Ovary (tissue), 10 donors: ENCODE measurements at regions of chr11 and their contacts with region 1.

Region 1: GRCh38 chr11:117226388-117227385 is 5.2 kb downstream of the PCSK7 start:
- DNase-seq: peak in 2 of 5 donors; percentile 51 to 53
- H3K4me3 ChIP-seq: no peak overlapping the region
- H3K27ac ChIP-seq: no peak overlapping the region
- H3K4me1 ChIP-seq: peaks cover 4% of the 10 kb centered on the region
- H3K27me3 ChIP-seq: no peaks in the 10 kb centered on the region
- CTCF ChIP-seq: peak; percentile 54 to 84 (median 80)
- EP300 ChIP-seq: no peak
- POLR2A ChIP-seq: no peak

Region 2: DNA sequence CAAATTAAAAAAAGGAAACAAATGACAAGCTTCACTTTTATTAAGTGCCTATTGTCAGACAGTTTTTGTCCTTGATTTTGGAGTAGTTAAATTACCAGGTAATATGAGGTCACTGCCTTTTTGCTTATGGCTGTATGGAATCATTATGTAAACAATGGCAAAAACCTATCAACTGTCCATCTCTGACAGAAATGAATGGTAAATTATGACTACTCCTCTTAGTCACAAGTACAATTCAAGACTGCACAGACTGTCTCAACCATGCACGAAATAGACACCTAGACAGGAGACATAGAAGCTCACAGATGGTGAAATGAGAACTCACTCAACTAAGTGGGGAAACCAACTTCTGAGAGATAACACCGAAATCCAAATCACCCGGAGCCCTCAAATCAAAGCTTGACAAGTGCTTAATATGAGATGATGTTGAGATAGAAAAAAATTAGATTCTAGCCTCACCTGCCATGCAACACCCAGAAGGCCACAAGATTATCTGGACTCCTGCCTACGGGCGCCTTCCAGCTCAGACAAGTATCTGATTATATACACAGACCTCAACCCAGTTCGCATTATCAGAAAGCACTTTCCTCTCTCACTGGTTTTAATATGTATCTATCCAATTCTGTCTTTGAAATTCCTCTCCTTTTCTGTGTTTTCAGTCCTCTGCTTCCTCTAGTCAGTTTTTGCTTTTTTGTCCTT is 1921.8 kb before region 1 on chr11:
- intact Hi-C with region 1: no loop called
- DNase-seq: no peak
- H3K4me3 ChIP-seq: no peak overlapping the region
- H3K27ac ChIP-seq: no peak overlapping the region
- H3K4me1 ChIP-seq: no peaks in the 10 kb centered on the region
- H3K27me3 ChIP-seq: no peaks in the 10 kb centered on the region
- CTCF ChIP-seq: no peak
- EP300 ChIP-seq: no peak
- POLR2A ChIP-seq: no peak

Region 3: DNA sequence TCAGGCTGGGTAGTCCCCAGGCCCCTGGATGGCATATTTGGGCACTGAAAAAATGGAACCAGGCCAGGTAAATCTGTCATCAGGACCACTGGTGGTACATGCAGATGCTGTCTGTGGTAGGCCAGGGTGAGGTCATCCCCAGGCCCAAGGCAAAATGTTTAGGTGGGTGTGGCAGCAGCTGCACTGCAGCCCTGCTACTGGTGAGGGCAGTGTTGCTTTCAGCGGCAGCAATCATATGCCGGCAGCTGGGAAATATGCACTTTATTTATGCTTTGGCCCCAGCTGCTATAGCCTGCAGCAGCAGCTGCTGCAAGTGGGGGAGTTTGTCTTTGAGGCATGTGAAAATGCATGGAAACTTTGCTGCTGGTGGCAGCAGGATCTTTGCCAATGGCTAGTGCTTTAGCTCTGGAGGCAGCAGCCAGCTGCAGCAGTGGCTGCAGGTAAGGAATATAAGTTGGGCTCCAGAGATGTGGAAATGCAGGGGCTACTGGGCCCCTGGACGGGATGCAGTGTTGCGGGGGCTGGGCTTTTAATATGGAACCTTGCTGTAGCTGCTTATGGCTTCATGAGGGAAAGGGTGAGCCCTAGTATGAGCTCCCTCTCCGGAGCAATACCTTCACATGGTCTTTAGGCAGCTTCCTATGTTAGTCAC is 1356.8 kb before region 1 on chr11:
- intact Hi-C with region 1: no loop called
- DNase-seq: no peak
- H3K4me3 ChIP-seq: no peak overlapping the region
- H3K27ac ChIP-seq: no peak overlapping the region
- H3K4me1 ChIP-seq: no peaks in the 10 kb centered on the region
- H3K27me3 ChIP-seq: no peaks in the 10 kb centered on the region
- CTCF ChIP-seq: no peak
- EP300 ChIP-seq: no peak
- POLR2A ChIP-seq: no peak

Region 4: DNA sequence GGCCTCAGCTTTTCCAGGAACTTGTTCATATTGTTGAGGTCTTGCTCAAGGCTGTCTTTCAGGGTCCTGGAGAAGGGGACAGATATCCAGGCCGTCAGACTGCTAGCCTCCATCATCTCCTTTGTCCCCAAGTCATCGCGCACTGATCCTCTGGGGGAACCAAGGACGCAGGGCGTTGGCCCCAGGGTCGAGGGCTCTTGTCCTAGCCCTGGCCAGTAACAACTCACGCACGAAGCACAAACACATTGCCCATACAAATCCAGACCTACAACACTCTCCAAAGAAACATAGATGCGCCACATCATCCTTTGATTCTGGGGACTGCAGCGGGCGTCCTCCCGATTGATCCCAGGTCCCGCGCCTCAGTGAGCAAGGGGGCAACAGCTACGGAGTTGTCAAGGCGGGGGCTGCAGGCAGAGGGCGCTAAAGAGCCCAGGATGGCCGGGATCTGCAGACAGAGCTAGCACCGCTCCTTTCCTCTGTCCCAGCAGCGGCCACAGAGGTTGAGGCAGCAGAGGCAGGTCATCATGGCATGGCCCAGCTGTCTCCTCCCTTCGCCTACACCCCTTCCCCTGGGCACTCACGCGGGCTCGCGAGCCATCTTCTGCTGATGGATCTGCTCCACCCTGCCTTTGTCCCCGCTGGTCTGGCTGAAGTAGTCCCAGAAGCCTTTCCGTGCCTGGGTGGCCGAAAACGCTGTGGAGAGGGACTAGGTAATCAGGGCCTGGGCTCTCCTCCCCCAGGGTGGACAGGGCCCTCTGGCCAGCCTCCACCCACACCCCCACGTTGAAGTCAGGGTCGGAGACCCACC is 435.5 kb before region 1 on chr11:
- intact Hi-C with region 1: loop called in 2 of 4 experiments (anchors 5 to 10 kb)
- DNase-seq: peak; percentile 68 to 88 (median 85)
- H3K4me3 ChIP-seq: no peak overlapping the region
- H3K27ac ChIP-seq: no peak overlapping the region
- H3K4me1 ChIP-seq: peaks cover 9% of the 10 kb centered on the region
- H3K27me3 ChIP-seq: no peaks in the 10 kb centered on the region
- CTCF ChIP-seq: peak; percentile 68 to 85 (median 82)
- EP300 ChIP-seq: no peak
- POLR2A ChIP-seq: no peak

Region 5: DNA sequence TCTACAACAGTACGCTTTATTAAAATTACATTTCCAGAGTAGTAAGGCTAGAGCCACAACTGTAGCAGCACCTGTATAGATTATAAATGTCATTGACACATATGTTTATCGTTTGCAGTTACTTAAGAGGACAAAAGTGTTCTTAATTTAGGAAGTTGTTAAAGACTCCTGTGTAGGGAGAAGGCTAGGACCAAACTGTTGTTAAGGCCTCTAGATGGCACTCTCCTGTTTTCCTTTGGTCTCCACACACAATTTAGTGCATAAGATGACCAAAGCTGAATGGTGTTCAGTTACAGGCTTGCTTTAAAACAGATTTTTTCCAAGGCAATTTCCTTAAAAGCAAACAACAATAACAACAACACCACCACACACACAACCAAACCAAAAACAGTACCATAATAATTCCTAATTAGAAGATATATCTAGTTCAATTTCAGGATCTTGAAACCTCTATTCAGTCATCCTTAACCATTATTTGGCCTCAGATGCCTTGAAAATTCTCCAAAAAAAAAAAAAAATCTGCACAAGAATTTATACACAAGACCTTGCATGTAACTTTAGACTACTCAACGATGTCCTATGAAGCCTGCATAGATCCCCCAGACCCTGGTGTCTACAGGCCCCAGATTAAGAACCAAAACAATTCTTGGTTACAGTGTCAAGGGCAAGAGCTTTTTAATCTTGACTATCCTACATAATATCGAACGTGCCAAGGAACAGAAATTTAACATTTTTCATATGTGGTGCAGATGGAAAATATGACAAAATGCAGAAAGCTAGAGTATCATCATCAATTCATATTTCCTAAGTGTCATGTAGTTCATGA is 346.7 kb before region 1 on chr11:
- intact Hi-C with region 1: loop called in 2 of 4 experiments (anchors 5 to 10 kb)
- DNase-seq: no peak
- H3K4me3 ChIP-seq: no peak overlapping the region
- H3K27ac ChIP-seq: no peak overlapping the region
- H3K4me1 ChIP-seq: no peaks in the 10 kb centered on the region
- H3K27me3 ChIP-seq: no peaks in the 10 kb centered on the region
- CTCF ChIP-seq: peak in 2 of 3 donors; percentile 55 to 76
- EP300 ChIP-seq: no peak
- POLR2A ChIP-seq: no peak

Region 6: GRCh38 chr11:117107701-117108590 is 118.7 kb before region 1 on chr11:
- intact Hi-C with region 1: loop called in 2 of 4 experiments (anchors 10 kb)
- DNase-seq: no peak
- H3K4me3 ChIP-seq: no peak overlapping the region
- H3K27ac ChIP-seq: no peak overlapping the region
- H3K4me1 ChIP-seq: no peaks in the 10 kb centered on the region
- H3K27me3 ChIP-seq: no peaks in the 10 kb centered on the region
- CTCF ChIP-seq: no peak
- EP300 ChIP-seq: no peak
- POLR2A ChIP-seq: no peak

Region 7: DNA sequence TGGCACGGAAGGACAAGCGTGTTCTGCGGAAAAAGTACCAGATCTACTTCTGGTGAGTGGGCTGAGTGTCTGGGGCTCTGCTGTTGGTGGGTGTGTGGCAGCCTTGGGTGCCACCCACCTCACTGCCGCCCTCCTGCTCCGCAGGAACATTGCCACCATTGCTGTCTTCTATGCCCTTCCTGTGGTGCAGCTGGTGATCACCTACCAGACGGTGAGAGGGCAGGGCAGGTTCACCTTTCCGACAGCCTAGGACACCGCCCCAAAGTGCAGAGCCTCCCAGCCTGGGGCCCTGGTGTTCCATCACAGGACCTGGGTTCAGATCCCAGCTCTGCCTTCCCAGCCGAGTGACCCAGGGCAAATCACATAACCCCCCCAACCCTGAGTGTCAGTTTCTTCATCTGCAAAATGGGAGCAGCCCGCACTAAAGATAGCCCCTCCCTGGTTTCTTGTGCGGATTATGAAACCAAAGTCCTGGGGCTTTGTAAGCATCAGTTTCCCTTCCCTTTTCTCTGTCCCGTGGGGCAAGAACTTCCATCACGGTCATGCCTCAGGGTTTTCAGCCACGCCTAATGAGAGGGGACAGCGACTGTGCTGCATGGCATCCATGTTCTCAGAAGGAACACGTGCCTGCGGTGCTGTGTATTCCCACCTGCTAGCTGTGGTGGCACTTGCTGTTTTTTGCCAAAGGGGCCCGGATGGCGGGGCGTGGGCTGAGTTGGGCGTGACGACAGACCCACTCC is 37.3 kb before region 1 on chr11:
- intact Hi-C with region 1: loop called in 2 of 4 experiments (anchors 5 kb)
- DNase-seq: peak in 3 of 5 donors; percentile 14 to 31 (median 22)
- H3K4me3 ChIP-seq: no peak overlapping the region
- H3K27ac ChIP-seq: no peak overlapping the region
- H3K4me1 ChIP-seq: peaks cover 19% of the 10 kb centered on the region
- H3K27me3 ChIP-seq: no peaks in the 10 kb centered on the region
- CTCF ChIP-seq: no peak
- EP300 ChIP-seq: no peak
- POLR2A ChIP-seq: no peak

Region 8: GRCh38 chr11:117300283-117300663 is 73.6 kb after region 1 on chr11:
- intact Hi-C with region 1: no loop called
- DNase-seq: peak; percentile 81 to 86 (median 85)
- H3K4me3 ChIP-seq: peak overlapping the region; percentile 20
- H3K27ac ChIP-seq: peak overlapping the region in 1 of 2 donors; percentile 70
- H3K4me1 ChIP-seq: peaks cover 18% of the 10 kb centered on the region
- H3K27me3 ChIP-seq: no peaks in the 10 kb centered on the region
- CTCF ChIP-seq: no peak
- EP300 ChIP-seq: no peak
- POLR2A ChIP-seq: no peak

Region 9: DNA sequence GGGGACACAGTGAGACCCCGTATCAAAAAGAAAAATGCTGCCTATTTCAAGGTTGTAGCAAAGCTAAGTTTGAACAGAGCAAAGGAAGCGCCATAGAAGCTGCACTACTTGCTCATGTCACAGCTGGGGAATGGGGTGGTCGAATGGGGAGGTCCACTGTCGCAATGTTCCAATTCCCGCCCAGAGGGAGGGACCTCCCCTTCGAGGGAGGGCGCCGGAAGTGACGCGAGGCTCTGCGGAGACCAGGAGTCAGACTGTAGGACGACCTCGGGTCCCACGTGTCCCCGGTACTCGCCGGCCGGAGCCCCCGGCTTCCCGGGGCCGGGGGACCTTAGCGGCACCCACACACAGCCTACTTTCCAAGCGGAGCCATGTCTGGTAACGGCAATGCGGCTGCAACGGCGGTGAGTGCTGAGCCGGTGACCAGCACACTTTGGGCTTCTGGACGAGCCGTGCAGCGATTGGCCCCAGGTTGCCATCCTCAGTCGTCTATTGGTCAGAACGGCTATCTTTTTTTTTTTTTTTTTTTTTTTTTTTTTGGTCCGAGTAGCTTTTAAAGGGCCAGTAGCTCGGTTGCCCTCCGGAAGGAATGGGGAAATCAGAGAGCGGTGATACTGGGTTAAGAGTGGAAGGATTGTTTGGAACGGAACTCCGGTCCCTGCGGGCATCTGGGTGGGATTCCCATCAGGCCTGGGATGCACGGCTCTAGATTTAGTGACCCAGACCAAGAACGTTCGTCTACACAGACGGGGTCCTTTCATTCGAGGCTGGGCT is 1858.2 kb after region 1 on chr11 and contains the start of gene HMBS:
- intact Hi-C with region 1: no loop called
- DNase-seq: peak; percentile 90 to 94 (median 93)
- H3K4me3 ChIP-seq: peak within 1 kb of the TSS; percentile 83
- H3K27ac ChIP-seq: peak within 1 kb of the TSS; percentile 74 to 79
- H3K4me1 ChIP-seq: peaks cover 7% of the 10 kb centered on the region
- H3K27me3 ChIP-seq: no peaks in the 10 kb centered on the region
- CTCF ChIP-seq: no peak
- EP300 ChIP-seq: peak; percentile 41
- POLR2A ChIP-seq: peak; percentile 38
- total RNA-seq, gene HMBS: 1.1 to 19.4 (median 8.7) TPM